ENCODE measurements at regions of chr16 and their contacts with region 1.

Region 1: DNA sequence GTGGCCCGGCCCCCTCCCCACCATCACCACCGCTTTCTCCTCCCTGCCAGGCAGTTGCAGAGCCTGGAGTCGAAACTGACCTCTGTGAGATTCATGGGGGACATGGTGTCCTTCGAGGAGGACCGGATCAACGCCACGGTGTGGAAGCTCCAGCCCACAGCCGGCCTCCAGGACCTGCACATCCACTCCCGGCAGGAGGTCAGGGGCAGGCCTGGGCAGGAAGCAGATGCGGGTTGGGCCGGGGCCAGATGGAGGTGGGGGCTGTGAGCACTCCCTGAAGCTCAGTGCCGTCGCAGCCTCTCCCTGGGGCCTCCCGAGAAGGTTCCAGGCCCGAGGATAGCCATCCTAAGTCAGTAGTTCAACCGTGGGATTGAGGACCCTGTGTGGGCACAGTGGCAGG is 14.2 kb upstream of the ADGRG3 start:
- DNase-seq: no peak
- H3K4me3 ChIP-seq: no peak overlapping the region
- H3K27ac ChIP-seq: no peak overlapping the region
- H3K4me1 ChIP-seq: peaks cover 0 to 3% (median 0%) of the 10 kb centered on the region in 4 experiments; a peak in 4 of 7 replicates
- H3K27me3 ChIP-seq: no peaks in the 10 kb centered on the region
- CTCF ChIP-seq: no peak
- EP300 ChIP-seq: no peak
- POLR2A ChIP-seq: no peak
- RAD21 ChIP-seq: no peak

Region 2: DNA sequence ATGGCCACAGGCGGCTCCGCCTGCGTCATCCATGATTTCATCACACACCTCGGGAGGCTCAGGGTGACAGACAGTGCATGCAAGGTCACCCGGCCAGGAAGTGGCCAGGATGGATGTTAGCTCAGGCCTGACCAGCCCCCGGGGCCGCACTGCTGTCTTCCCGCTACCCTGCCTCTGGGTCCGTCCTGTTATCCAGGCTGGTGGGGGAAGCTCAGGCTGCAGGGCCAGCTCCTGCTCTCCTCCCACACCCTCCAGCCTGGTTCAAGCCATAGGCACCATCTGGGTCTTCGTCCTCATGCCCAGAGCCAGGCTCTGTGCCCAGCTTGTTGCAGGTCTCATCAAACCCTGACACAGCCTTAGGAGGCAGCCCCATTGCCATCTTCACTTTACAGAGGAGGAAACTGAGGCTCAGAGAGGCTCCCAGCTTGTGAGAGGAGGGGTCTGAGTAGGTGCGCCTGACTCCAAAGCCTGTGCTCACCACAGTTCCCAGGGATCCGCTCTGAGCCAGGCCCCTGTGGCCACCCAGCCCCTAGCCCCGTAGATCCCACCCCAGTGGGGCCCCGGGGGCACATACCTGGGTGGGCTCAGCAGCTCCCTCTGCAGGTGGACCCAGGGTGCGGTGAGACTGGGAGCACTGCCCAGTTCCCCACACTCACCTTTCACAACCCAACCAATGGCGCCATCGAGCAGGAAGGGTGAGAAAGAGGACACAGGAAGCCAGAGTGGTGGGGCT is 13.8 kb after region 1 on chr16:
- CTCF ChIA-PET with region 1: interaction called, 47 read pairs
- POLR2A ChIA-PET with region 1: no interaction called
- DNase-seq: peak in 1 of 2 experiments; percentile 75
- H3K4me3 ChIP-seq: no peak overlapping the region
- H3K27ac ChIP-seq: no peak overlapping the region
- H3K4me1 ChIP-seq: peaks cover 0 to 4% (median 0%) of the 10 kb centered on the region in 4 experiments; a peak in 3 of 7 replicates
- H3K27me3 ChIP-seq: no peaks in the 10 kb centered on the region
- CTCF ChIP-seq: peak; percentile 64 to 68 (median 65)
- EP300 ChIP-seq: no peak
- POLR2A ChIP-seq: no peak
- RAD21 ChIP-seq: peak; percentile 20 to 47; a peak in 3 of 4 replicates

Measured in H1 (cell line).